Esophagus squamous epithelium (tissue), 5 donors: ENCODE measurements at regions of chr12 and their contacts with region 1.

Region 1: GRCh38 chr12:89352492-89353187 is at the start of gene DUSP6:
- DNase-seq: peak; percentile 80
- H3K4me3 ChIP-seq: peak within 1 kb of the TSS; percentile 55 to 91 (median 80)
- H3K27ac ChIP-seq: peak within 1 kb of the TSS; percentile 97 to 99 (median 98)
- H3K4me1 ChIP-seq: peaks cover 19 to 88% (median 22%) of the 10 kb centered on the region in 3 donors
- H3K27me3 ChIP-seq: no peaks in the 10 kb centered on the region
- CTCF ChIP-seq: no peak
- POLR2A ChIP-seq: peak in 2 of 4 donors; percentile 78 to 93
- total RNA-seq, gene DUSP6: 17.6 to 30.4 (median 24.9) TPM

Region 2: DNA sequence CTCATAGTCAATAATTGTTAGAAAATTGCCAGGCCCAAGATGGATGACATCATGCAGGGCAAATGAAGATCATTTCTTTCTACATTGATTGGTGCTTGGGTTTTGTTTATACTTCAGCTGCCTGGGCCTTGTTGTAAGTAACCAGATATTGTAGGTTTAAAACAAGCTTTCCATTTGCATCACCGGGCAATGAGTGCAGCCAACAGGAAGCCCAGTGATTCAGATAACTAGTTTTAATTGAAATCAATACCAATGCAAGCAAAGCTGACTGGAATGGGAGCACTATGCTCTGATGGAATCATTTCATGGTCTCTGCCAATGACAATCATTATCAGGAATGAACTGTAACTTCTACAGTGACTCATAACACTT is 279.6 kb before region 1 on chr12:
- intact Hi-C with region 1: no loop called
- DNase-seq: no peak
- H3K4me3 ChIP-seq: no peak overlapping the region
- H3K27ac ChIP-seq: no peak overlapping the region
- H3K4me1 ChIP-seq: no peaks in the 10 kb centered on the region
- H3K27me3 ChIP-seq: no peaks in the 10 kb centered on the region
- CTCF ChIP-seq: no peak
- POLR2A ChIP-seq: no peak

Region 3: DNA sequence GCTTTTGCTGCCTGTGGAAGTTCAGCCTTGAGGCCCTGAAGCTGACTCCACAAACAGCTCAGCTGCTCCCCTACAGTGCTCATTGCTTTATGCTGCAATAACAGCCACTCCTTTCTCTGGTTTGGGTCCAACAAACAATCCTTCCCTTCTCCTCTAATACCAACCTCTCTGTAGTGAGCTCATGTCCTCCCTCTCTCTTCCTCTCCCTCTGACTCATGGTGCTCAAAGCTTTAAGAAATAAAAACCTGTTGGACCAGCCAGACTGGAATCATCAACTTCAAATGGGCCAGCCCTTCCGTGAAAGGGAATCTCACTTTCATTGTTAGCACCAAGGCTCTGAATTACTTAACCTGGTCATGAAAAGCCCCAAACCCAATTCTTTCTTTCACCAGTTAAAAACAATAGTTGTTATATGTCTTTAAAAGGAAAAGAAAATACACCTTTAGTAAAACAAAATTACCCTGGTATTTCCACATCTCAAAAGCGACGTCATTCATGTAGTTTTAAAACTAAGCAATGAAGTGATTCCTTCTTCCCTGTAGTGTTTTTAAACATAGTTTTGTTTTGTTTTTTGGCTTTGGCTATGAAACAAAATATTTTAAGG is 126.7 kb before region 1 on chr12:
- intact Hi-C with region 1: loop called (anchors 10 kb)
- DNase-seq: no peak
- H3K4me3 ChIP-seq: no peak overlapping the region
- H3K27ac ChIP-seq: peak overlapping the region; percentile 69 to 89 (median 80)
- H3K4me1 ChIP-seq: peaks cover 17 to 44% (median 21%) of the 10 kb centered on the region in 3 donors
- H3K27me3 ChIP-seq: no peaks in the 10 kb centered on the region
- CTCF ChIP-seq: no peak
- POLR2A ChIP-seq: peak in 1 of 4 donors; percentile 19

Region 4: DNA sequence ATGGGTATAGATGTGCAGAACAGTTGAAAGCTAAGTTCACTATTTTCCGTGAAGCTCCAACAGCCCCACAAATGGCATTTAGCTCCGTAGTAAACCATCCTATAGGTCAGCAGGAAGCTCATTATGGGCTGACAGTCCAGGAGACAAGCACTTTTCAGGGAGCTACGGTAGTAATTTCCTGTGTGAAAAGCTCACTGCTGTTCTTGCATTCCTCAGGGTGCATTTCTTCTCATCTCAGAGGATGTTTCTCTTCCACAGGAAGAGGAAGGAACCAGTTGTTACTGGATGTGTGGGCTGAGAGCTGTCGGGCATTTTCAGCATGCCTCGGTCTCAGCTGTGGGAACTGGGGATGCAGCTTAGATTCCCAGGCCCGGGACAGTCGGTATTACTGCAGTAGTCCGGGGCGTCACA is 99.2 kb after region 1 on chr12:
- intact Hi-C with region 1: loop called (anchors 10 kb)
- DNase-seq: no peak
- H3K4me3 ChIP-seq: peak overlapping the region in 1 of 4 donors; percentile 29
- H3K27ac ChIP-seq: peak overlapping the region; percentile 35 to 83 (median 76)
- H3K4me1 ChIP-seq: peaks cover 4 to 30% (median 7%) of the 10 kb centered on the region in 3 donors
- H3K27me3 ChIP-seq: no peaks in the 10 kb centered on the region
- CTCF ChIP-seq: no peak
- POLR2A ChIP-seq: no peak